ENCODE measurements at regions of chr17 and their contacts with region 1.

Region 1: GRCh38 chr17:7454980-7455379 is 10.1 kb downstream of the CHRNB1 start:
- DNase-seq: no peak
- H3K4me3 Mint-ChIP-seq: peak overlapping the region; percentile 86
- H3K27ac Mint-ChIP-seq: peak overlapping the region; percentile 87
- H3K4me1 Mint-ChIP-seq: peaks cover 22% of the 10 kb centered on the region
- H3K27me3 Mint-ChIP-seq: no peaks in the 10 kb centered on the region

Region 2: GRCh38 chr17:7444682-7445618 is 10.0 kb before region 1 on chr17 and contains the start of gene CHRNB1:
- intact Hi-C with region 1: loop called (anchors 1 kb)
- DNase-seq: peak; percentile 76
- H3K4me3 Mint-ChIP-seq: peak within 1 kb of the TSS; percentile 83
- H3K27ac Mint-ChIP-seq: peak within 1 kb of the TSS; percentile 10
- H3K4me1 Mint-ChIP-seq: peaks cover 32% of the 10 kb centered on the region
- H3K27me3 Mint-ChIP-seq: peaks cover 29% of the 10 kb centered on the region
- total RNA-seq, gene CHRNB1: 6.1 and 7.2 TPM in 2 replicates

Measured in activated CD4-positive, alpha-beta T cell treated with anti-CD3 and anti-CD28 coated beads, Interleukin-2, amount 10 ng/mL, durations not matched to agents 24 days and 14 days (primary cell).